Activated CD4-positive, alpha-beta T cell treated with anti-CD3 and anti-CD28 coated beads for 36 hours (primary cell): ENCODE measurements at regions of chr1 and their contacts with region 1.

Region 1: GRCh38 chr1:203273206-203273868 is 32.0 kb upstream of the BTG2 start:
- DNase-seq: peak; percentile 96
- ATAC-seq: peak; percentile 78
- H3K4me3 Mint-ChIP-seq: peak overlapping the region; percentile 70
- H3K27ac Mint-ChIP-seq: peak overlapping the region; percentile 78
- H3K4me1 Mint-ChIP-seq: peaks cover 65% of the 10 kb centered on the region
- H3K27me3 Mint-ChIP-seq: no peaks in the 10 kb centered on the region

Region 2: GRCh38 chr1:203290261-203291089 is 17.1 kb after region 1 on chr1:
- CTCF ChIA-PET with region 1: interaction called, 150 read pairs
- POLR2A ChIA-PET with region 1: interaction called, 33 read pairs
- intact Hi-C with region 1: loop called (anchors 1 kb)
- DNase-seq: peak; percentile 99
- ATAC-seq: peak; percentile 50
- H3K4me3 Mint-ChIP-seq: peak overlapping the region; percentile 78
- H3K27ac Mint-ChIP-seq: peak overlapping the region; percentile 98
- H3K4me1 Mint-ChIP-seq: peaks cover 83% of the 10 kb centered on the region
- H3K27me3 Mint-ChIP-seq: no peaks in the 10 kb centered on the region

Region 3: GRCh38 chr1:203304919-203305808 is 31.8 kb after region 1 on chr1 and contains the start of gene BTG2:
- CTCF ChIA-PET with region 1: interaction called, 33 read pairs
- POLR2A ChIA-PET with region 1: interaction called, 27 read pairs
- intact Hi-C with region 1: loop called (anchors 1 kb)
- DNase-seq: peak; percentile 96
- ATAC-seq: peak; percentile 88
- H3K4me3 Mint-ChIP-seq: peak within 1 kb of the TSS; percentile 98
- H3K27ac Mint-ChIP-seq: peak within 1 kb of the TSS; percentile 97
- H3K4me1 Mint-ChIP-seq: peaks cover 54% of the 10 kb centered on the region
- H3K27me3 Mint-ChIP-seq: no peaks in the 10 kb centered on the region
- total RNA-seq, gene BTG2: 114 to 142 TPM

Region 4: DNA sequence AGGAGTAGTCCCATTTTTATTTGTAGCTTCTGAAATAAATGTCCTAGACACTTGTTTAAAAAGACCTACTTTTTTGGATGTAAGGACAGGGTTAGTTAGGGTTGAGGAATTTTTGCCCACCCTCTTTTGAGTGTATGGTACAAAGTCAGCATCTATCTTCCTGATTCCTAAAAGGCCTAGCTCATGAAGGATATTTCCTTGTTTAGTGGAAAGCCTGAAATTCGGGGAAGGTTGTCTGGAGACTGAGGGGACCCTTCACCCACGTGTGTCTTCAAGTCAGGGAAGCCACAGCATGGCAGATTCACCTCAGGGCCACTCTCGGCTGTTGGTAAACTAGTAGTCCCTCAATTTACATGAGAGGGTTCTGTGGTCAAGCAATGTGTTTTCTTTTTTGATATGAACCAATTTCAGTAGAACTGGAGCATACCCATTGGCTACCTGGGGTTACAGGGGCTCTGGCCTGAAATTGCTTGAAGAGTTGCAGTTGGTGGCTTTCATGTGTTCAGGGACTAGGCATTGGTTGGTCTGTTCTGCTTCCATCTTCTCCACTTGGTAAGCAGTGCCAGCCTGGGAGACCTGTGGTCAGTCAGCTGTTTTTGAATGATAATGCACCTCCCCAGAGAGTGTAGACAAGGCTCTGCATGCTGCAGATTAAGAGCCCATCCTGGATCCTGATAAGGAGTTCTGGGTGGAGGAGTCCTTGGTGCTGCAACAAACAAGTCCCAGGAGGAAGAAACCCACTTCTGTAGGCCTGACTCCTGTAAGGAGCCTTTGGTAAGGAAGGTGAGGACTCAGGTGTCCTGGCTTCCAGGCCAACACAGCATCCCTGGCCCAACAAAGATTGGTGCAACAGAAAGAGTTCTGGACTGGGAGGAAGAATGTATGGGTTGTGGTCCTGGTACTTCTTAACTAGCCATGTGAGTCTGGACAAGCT is 38.3 kb after region 1 on chr1:
- CTCF ChIA-PET with region 1: interaction called, 33 read pairs
- POLR2A ChIA-PET with region 1: interaction called, 27 read pairs
- intact Hi-C with region 1: no loop called
- DNase-seq: no peak
- ATAC-seq: no peak
- H3K4me3 Mint-ChIP-seq: no peak overlapping the region
- H3K27ac Mint-ChIP-seq: peak overlapping the region; percentile 8
- H3K4me1 Mint-ChIP-seq: peaks cover 41% of the 10 kb centered on the region
- H3K27me3 Mint-ChIP-seq: no peaks in the 10 kb centered on the region

Region 5: DNA sequence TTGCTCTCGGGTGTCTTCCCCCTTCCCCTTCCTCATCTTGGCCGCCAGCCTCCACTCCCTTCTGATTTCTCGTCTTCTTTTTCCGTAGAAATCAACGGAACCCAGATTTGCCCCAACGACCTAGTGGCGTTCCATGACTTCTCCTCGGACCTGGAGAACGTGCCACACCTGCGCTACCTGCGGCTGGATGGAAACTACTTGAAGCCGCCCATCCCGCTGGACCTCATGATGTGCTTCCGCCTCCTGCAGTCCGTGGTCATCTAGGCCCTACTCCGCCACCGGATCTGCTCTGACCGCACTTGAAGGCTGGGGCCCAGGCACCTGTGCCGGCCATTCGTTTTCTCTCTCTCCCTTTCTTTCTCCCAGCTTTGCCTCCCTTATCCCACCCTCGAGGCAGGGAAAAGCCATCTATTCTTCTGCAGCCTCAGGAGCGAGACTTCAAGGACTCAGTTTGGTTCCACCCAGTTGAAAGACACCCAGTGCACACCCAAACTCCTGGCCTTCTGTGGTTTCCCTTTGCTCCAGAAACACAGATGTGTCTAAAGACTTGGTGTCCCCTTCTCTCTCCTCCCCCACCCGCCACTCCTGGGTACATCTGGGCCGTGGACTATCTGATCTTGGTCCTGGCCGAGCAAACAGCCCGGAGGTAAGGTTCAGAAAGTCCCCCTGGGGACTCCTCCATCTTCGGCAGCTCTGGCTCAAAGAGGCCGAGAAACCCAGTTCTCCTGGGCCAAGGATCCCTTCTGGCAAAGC is 213.5 kb after region 1 on chr1:
- CTCF ChIA-PET with region 1: interaction called, 48 read pairs
- POLR2A ChIA-PET with region 1: no interaction called
- intact Hi-C with region 1: loop called in 1 of 2 experiments (anchors 1 kb)
- DNase-seq: no peak
- ATAC-seq: no peak
- H3K4me3 Mint-ChIP-seq: peak overlapping the region; percentile 56
- H3K27ac Mint-ChIP-seq: no peak overlapping the region
- H3K4me1 Mint-ChIP-seq: peaks cover 7% of the 10 kb centered on the region
- H3K27me3 Mint-ChIP-seq: no peaks in the 10 kb centered on the region